Activated naive CD4-positive, alpha-beta T cell treated with anti-CD3 and anti-CD28 coated beads, Interleukin-2, amount 10 ng/mL, durations not matched to agents 7 days and 5 days (primary cell): ENCODE measurements at regions of chr14 and their contacts with region 1.

Region 1: GRCh38 chr14:106790189-106791036 is 1264.0 kb downstream of the TMEM121 start:
- DNase-seq: peak; percentile 86
- H3K4me3 Mint-ChIP-seq: no peak overlapping the region
- H3K27ac Mint-ChIP-seq: no peak overlapping the region
- H3K4me1 Mint-ChIP-seq: peaks cover 13% of the 10 kb centered on the region
- H3K27me3 Mint-ChIP-seq: peaks cover 36% of the 10 kb centered on the region

Region 2: GRCh38 chr14:106489112-106489881 is 301.1 kb before region 1 on chr14:
- CTCF ChIA-PET with region 1: no interaction called
- DNase-seq: no peak
- H3K4me3 Mint-ChIP-seq: no peak overlapping the region
- H3K27ac Mint-ChIP-seq: no peak overlapping the region
- H3K4me1 Mint-ChIP-seq: peaks cover 8% of the 10 kb centered on the region
- H3K27me3 Mint-ChIP-seq: peaks cover 3% of the 10 kb centered on the region

Region 3: DNA sequence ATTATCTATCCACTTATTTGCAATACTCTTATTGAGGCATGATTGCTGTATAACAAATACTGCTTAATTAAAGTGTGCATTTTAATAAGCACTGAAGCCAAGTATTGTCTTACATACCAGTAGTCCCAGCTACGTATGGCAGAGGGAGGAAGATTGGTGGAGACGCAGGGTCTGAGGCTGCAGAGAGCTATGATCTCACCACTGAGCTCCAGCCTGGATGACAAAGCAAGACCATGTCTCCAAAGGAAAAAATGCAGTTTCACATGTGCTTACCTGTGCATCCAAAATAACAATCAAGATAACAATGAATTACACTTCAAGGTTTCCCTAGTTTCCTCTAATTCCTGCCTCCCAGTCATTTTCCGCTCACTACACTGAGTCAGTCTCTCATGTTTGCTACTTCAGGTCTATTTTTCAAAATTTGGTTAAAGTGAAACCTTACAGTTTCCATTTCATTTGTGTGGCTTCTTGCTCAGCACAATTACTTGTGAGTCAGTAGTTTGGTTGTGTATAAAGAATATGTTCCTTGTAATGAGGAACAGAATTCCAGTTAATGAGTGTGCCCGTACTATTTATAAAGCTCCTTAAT is 13.9 kb before region 1 on chr14:
- CTCF ChIA-PET with region 1: interaction called, 14 read pairs
- DNase-seq: no peak
- H3K4me3 Mint-ChIP-seq: no peak overlapping the region
- H3K27ac Mint-ChIP-seq: no peak overlapping the region
- H3K4me1 Mint-ChIP-seq: peaks cover 11% of the 10 kb centered on the region
- H3K27me3 Mint-ChIP-seq: peaks cover 21% of the 10 kb centered on the region

Region 4: GRCh38 chr14:106872611-106873446 is 82.4 kb after region 1 on chr14:
- CTCF ChIA-PET with region 1: interaction called, 13 read pairs
- DNase-seq: peak; percentile 88
- H3K4me3 Mint-ChIP-seq: peak overlapping the region; percentile 31
- H3K27ac Mint-ChIP-seq: no peak overlapping the region
- H3K4me1 Mint-ChIP-seq: peaks cover 23% of the 10 kb centered on the region
- H3K27me3 Mint-ChIP-seq: peaks cover 65% of the 10 kb centered on the region